ENCODE measurements at regions of chrX and their contacts with region 1.

Region 1: DNA sequence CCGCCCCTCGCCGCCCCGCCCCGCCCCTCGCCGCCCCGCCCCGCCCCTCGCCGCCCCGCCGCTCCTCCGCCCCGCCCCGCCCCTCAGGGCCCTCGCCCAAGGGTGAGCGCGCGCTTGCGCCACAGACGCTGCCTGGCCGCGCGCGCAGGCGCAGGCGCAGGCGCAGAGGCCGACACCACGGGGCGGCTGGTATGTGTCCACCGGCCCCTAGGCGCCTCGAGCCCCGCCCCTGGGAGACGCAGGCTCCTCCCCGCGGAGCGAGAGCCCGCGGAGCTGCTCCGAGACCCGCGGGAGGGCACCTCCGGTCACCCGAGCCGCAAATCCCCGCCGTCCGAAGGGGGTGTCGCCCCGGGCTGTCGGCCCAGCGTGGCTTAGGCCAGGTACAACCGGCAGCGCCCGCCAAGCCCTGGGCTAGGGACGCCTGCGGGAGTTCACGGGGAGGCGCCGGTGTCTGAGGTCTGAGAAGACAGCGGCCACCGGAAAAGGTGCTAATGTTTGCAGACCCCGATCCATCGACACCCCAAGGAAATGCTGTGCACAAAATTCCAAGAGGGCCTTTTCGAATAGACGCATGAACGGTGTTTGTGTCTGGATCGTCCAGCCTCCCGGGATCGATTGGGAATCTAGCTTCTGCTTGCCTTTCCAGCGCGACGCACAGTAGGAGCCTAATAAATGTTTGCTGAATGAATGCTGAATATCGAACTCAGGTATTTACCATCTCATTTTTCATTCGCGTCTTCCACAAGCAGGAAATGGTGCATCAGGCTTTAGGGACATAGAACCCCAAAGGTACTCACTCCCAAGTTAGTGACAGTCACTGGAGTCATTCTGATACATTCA is 473 bp upstream of the CCNQ start:
- DNase-seq: peak; percentile 94
- H3K4me3 ChIP-seq: peak overlapping the region; percentile 48 to 80 (median 74)
- H3K27ac ChIP-seq: peak overlapping the region; percentile 75 to 78 (median 76)
- H3K4me1 ChIP-seq: peaks cover 0 to 22% (median 14%) of the 10 kb centered on the region in 4 donors
- H3K27me3 ChIP-seq: no peaks in the 10 kb centered on the region
- CTCF ChIP-seq: no peak
- EP300 ChIP-seq: no peak
- POLR2A ChIP-seq: no peak

Region 2: DNA sequence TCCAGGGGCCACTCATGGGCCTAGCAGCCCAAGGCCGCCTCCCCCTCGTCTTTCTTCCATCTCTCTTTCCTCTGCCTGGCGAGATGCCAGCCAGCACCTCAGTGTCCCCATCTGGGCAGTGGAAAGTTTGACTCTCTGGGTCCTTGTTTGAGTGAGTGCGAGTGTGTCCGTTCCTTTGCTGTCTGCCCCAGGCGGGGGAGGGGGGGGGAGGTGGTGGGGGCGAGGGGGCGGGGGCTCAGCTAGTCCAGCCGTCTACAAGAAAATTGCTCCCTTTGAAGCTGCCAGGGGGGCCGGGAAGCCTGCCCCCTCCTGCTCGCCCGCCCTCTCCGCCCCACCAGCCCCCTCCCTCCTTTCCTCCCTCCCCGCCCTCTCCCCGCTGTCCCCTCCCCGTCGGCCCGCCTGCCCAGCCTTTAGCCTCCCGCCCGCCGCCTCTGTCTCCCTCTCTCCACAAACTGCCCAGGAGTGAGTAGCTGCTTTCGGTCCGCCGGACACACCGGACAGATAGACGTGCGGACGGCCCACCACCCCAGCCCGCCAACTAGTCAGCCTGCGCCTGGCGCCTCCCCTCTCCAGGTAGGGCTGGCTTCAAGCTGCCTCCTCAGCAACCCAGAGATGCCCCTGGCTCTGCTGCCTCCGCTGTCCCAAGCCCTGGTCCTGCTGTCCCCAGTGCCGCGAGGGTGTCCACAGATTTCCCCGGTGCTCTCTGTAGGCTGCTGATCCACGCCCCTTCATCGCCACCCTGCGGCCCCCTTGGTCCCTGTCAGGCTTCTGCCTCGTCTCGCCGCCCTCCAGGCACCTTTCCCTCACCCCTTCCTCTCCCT is 104.7 kb before region 1 on chrX and contains the start of gene BGN:
- intact Hi-C with region 1: no loop called
- DNase-seq: no peak
- H3K4me3 ChIP-seq: peak within 1 kb of the TSS in 3 of 4 donors; percentile 20 to 41 (median 23)
- H3K27ac ChIP-seq: peak within 1 kb of the TSS; percentile 17 to 49 (median 30)
- H3K4me1 ChIP-seq: no peaks in the 10 kb centered on the region
- H3K27me3 ChIP-seq: peaks cover 0 to 7% (median 0%) of the 10 kb centered on the region in 3 donors
- CTCF ChIP-seq: peak in 1 of 4 experiments; percentile 27
- EP300 ChIP-seq: no peak
- POLR2A ChIP-seq: no peak
- total RNA-seq, gene BGN: 5.7 to 181 (median 10.1) TPM

Region 3: DNA sequence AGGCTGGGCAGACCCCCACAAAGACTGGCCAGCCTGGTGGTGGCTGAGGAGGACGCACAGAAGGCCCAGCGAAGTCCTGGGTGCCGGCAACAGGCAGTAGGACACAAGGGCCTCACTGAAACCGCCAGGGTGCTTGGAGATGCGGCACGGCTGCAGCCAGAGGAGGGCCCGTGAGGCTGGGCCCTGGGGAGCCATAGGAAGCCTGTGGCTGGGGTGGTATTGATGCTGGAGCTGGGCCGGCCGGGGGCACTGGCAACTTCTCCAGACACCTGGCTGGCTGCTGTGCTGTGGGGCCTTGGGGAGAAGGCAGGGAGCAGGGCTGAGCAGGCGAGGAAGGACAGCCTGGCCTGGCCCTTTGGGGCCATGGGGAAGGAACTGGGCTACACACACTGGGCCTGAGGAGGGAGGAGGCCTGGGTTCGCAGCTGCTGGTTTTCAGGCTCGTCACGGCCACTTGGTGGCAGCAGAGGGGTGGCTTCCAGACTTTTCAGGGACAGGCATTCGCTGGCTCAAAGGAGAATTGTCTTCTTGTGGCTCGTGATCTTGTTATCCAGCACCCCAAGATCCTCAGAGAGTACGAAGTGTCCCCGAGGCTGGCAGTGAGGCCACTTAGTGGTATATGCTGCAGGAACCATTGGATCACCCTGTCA is 44.8 kb before region 1 on chrX:
- intact Hi-C with region 1: loop called (anchors 5 kb)
- DNase-seq: peak; percentile 82
- H3K4me3 ChIP-seq: no peak overlapping the region
- H3K27ac ChIP-seq: no peak overlapping the region
- H3K4me1 ChIP-seq: no peaks in the 10 kb centered on the region
- H3K27me3 ChIP-seq: no peaks in the 10 kb centered on the region
- CTCF ChIP-seq: peak; percentile 27 to 58 (median 44)
- EP300 ChIP-seq: no peak
- POLR2A ChIP-seq: no peak

Region 4: GRCh38 chrX:153649178-153649914 is 49.9 kb after region 1 on chrX:
- intact Hi-C with region 1: loop called (anchors 5 kb)
- DNase-seq: peak; percentile 49
- H3K4me3 ChIP-seq: no peak overlapping the region
- H3K27ac ChIP-seq: no peak overlapping the region
- H3K4me1 ChIP-seq: peaks cover 0 to 16% (median 15%) of the 10 kb centered on the region in 4 donors
- H3K27me3 ChIP-seq: peaks cover 27 to 49% (median 31%) of the 10 kb centered on the region in 3 donors
- CTCF ChIP-seq: no peak
- EP300 ChIP-seq: no peak
- POLR2A ChIP-seq: no peak

Measured in sigmoid colon (tissue), 7 donors.